Ascending aorta (tissue), 2 donors: ENCODE measurements at regions of chr10 and their contacts with region 1.

Region 1: DNA sequence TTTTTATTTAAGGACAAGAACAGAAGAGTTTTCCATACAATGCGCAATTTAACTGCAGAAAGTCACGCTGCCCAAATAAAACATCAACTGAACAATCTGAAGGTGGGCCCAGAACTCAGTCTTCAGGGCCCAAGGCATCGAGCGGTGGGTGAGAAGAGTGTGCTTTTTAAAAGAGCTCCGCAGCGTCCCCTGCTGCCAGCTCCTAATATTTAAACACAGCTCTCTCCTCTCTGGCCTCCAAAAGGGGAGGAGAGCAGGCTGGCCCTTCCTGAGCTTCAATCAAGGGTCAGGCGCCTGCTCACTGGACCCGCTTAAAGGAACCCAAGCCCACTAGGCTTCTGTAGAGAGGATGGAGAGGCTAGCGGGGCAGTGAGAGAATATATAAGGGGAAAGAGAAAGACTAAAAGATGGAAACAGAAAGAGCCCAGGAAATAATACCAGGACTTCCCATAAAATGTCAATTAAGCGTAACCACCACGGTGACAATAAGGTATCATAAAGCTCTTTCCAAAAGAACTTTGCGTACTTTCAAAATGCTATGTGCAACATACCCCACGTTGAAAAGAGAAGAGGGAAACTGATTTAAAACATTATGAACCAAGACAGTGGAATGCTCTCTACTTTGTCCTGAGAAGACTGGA is 2.8 kb downstream of the FAM53B start:
- DNase-seq: peak in 1 of 2 donors; percentile 93
- H3K4me3 ChIP-seq: peak overlapping the region; percentile 31 to 80
- H3K27ac ChIP-seq: peak overlapping the region; percentile 63 to 73
- H3K4me1 ChIP-seq: peaks cover 10 to 57% of the 10 kb centered on the region in 2 donors
- H3K27me3 ChIP-seq: no peaks in the 10 kb centered on the region
- CTCF ChIP-seq: peak; percentile 83 to 92 (median 87)

Region 2: GRCh38 chr10:123154092-123154921 is 1587.1 kb before region 1 on chr10 and contains the start of gene BUB3:
- intact Hi-C with region 1: loop called (anchors 10 kb)
- DNase-seq: peak; percentile 95 to 99
- H3K4me3 ChIP-seq: peak within 1 kb of the TSS; percentile 74 to 92
- H3K27ac ChIP-seq: peak within 1 kb of the TSS; percentile 75 to 90
- H3K4me1 ChIP-seq: peaks cover 8 to 19% of the 10 kb centered on the region in 2 donors
- H3K27me3 ChIP-seq: peaks cover 16% of the 10 kb centered on the region
- CTCF ChIP-seq: peak in 2 of 3 experiments; percentile 5 to 30
- total RNA-seq, gene BUB3: 12.2 TPM

Region 3: DNA sequence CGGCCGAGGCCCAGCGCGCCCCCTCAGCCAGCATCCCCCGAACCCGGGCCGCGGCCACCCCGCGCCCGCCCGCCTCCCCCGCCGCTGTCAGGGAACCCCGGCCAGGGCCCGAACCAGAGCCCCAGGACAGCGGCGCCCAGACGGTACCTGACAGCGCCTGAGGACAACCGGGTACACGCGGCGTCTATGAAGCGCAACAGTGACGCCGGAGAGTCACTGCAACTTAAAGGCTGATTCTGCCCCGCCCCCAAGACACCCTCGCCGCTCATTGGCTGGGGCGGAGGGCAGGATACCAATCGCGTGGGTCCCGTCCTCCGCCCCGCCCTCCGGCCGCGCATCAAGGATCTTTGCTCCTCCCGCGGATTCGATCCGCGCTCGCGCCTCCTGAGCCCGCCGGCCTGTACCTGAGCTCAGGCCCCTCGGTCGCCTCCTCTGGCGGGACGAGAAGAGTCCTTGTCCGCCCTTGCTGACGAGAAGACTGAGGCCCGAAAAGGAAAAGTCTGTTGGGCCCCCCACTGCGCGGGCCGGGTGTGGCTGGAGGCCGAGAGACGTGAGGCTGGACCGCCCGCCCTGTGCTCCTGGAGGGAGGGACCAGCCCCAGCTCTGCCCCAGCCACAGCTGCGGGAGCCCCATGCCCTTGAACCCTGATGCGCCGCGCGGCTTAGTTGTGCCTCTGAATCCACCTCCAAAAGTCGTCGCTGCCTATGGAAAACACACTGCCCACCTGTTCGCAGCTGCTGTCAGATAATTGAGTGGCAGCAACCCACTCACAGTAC is 322.5 kb before region 1 on chr10 and contains the start of gene OAT:
- intact Hi-C with region 1: loop called (anchors 5 kb)
- DNase-seq: peak; percentile 92 to 98
- H3K4me3 ChIP-seq: peak within 1 kb of the TSS; percentile 77 to 94
- H3K27ac ChIP-seq: peak within 1 kb of the TSS; percentile 95 to 97
- H3K4me1 ChIP-seq: peaks cover 4 to 30% of the 10 kb centered on the region in 2 donors
- H3K27me3 ChIP-seq: no peaks in the 10 kb centered on the region
- CTCF ChIP-seq: no peak
- total RNA-seq, gene OAT: 48.2 TPM

Region 4: GRCh38 chr10:124539935-124540641 is 201.3 kb before region 1 on chr10:
- intact Hi-C with region 1: loop called (anchors 1 kb)
- DNase-seq: peak in 1 of 2 donors; percentile 75
- H3K4me3 ChIP-seq: peak overlapping the region in 1 of 2 donors; percentile 15
- H3K27ac ChIP-seq: no peak overlapping the region
- H3K4me1 ChIP-seq: peaks cover 0 to 3% of the 10 kb centered on the region in 2 donors
- H3K27me3 ChIP-seq: no peaks in the 10 kb centered on the region
- CTCF ChIP-seq: peak; percentile 79 to 88 (median 81)

Region 5: DNA sequence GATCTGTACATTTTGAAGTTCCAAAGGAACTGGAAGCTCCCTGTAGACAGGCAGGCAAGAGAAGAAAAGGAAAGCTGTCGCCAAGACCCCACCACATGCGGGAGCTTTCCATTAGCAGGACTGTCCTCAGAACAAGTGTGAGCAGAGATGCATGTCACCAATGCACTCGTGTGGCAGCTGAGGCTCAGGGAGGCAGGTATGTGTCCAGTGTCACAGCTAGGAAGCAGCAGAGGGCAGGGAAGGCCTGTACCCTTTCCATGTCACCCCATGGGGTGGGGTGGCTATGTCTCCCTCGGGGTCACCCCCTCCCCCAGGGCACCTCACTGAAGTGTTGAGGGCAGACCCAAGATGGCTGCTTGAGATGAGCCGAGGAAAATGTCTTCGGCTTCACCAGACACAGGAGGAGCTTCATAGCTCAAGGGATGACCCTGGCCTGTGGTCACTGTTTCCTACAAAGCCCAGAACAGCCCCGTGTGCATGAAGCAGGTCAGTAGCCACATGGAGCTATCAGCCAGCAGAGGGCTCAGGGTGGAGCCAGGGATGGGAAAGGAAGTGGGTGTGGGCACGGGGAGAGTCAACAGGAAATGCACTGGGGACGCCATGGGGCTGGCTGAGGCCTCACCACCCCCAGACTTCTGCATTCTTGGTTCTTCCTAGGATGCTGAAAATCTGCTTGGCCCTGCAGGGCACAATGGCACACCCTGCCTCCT is 93.8 kb before region 1 on chr10:
- intact Hi-C with region 1: loop called (anchors 5 kb)
- DNase-seq: peak; percentile 64 to 84
- H3K4me3 ChIP-seq: no peak overlapping the region
- H3K27ac ChIP-seq: peak overlapping the region; percentile 51 to 62
- H3K4me1 ChIP-seq: peaks cover 20 to 39% of the 10 kb centered on the region in 2 donors
- H3K27me3 ChIP-seq: no peaks in the 10 kb centered on the region
- CTCF ChIP-seq: peak in 2 of 3 experiments; percentile 11

Region 6: DNA sequence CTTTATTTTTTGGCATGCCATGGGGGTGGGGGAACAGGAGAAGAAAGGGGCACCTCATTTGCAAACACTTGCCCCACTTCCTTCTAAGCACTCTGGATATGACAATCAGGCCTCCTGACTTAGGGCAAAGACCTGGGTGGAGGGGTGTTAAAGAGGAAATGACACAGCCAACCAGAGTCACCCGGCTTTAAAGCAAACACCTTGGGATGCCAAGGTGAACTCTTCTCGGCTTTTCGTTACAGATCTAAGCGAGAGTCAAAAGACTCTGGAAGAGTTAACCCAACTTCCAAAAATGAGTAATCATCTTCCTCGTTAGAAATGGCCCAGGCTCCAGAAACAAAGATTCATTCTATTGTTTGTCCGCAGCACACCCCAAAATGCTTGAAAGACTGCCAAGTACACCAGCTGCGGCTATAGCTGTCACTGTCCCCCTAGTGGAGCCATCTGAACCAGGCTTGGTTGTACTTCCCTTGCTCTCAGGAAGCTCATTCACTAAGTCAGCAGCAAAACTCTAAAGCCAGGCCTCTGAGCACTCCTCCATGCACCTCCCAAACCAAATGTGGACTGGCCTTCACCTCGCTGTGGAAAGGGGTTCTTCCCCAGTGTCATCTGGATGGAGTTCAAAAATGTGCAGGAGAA is 22.1 kb before region 1 on chr10:
- intact Hi-C with region 1: no loop called
- DNase-seq: peak in 1 of 2 donors; percentile 78
- H3K4me3 ChIP-seq: no peak overlapping the region
- H3K27ac ChIP-seq: peak overlapping the region; percentile 44 to 50
- H3K4me1 ChIP-seq: peaks cover 19 to 23% of the 10 kb centered on the region in 2 donors
- H3K27me3 ChIP-seq: no peaks in the 10 kb centered on the region
- CTCF ChIP-seq: peak in 2 of 3 experiments; percentile 20 to 23

Region 7: DNA sequence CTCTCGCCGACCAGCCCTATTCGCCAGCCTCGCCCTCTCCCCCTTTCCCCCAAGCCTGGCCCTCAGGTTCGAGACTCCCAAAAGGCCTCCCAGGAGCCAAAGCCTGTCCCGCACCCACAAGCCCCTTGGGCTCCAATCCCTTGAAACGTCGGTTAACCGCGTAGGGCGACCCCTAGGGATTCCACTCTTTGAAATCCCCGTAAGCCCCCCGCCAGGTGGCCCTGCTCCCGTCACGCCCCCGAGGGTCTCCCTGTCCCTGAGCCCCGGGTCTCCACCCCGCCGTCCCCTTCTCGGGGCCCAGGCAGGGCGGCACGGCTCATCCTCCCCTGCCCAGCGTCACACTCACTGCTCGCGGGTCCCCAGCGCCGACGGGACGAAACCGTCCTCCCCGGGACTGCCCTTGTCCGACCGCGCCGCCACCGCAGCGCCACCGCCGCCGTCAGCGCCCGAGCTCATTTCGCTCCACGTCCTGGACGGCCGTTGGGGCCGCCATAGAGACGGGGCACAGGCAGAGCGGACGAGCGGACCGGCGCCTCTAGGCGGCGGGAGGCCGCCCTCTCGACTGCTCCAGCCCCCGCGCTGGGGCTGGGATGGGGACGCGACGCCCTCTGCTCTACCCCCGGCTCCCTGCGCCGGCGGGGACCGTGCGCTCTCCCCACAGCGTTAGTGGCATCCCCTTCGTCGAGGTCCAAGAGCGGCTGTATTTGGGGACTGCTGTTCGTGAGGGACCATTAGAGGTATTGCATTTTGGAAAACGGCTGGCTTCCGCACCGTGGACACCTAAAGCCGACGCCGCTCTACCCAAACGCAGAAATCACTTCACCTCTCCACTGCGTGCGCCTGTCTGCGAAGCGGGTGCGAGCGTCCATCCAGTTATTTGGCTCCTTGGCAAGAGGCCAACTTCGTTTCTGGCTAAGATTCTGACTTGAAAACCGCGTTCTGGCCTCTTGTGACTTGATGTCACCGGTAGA is 50.3 kb after region 1 on chr10 and contains the start of gene EEF1AKMT2:
- intact Hi-C with region 1: loop called (anchors 1 kb)
- DNase-seq: peak; percentile 20 to 88
- H3K4me3 ChIP-seq: peak within 1 kb of the TSS; percentile 81 to 94
- H3K27ac ChIP-seq: peak within 1 kb of the TSS; percentile 75 to 93
- H3K4me1 ChIP-seq: peaks cover 3 to 6% of the 10 kb centered on the region in 2 donors
- H3K27me3 ChIP-seq: no peaks in the 10 kb centered on the region
- CTCF ChIP-seq: peak; percentile 28 to 66 (median 54)
- total RNA-seq, gene EEF1AKMT2: 10.5 TPM

Region 8: GRCh38 chr10:125060826-125061556 is 319.6 kb after region 1 on chr10:
- intact Hi-C with region 1: loop called (anchors 10 kb)
- DNase-seq: peak; percentile 67 to 96
- H3K4me3 ChIP-seq: peak overlapping the region in 1 of 2 donors; percentile 47
- H3K27ac ChIP-seq: peak overlapping the region; percentile 99
- H3K4me1 ChIP-seq: peaks cover 59 to 90% of the 10 kb centered on the region in 2 donors
- H3K27me3 ChIP-seq: no peaks in the 10 kb centered on the region
- CTCF ChIP-seq: peak; percentile 81 to 91 (median 85)